Posterior cingulate gyrus (tissue), 11 donors: ENCODE measurements at regions of chr6 and their contacts with region 1.

Region 1: DNA sequence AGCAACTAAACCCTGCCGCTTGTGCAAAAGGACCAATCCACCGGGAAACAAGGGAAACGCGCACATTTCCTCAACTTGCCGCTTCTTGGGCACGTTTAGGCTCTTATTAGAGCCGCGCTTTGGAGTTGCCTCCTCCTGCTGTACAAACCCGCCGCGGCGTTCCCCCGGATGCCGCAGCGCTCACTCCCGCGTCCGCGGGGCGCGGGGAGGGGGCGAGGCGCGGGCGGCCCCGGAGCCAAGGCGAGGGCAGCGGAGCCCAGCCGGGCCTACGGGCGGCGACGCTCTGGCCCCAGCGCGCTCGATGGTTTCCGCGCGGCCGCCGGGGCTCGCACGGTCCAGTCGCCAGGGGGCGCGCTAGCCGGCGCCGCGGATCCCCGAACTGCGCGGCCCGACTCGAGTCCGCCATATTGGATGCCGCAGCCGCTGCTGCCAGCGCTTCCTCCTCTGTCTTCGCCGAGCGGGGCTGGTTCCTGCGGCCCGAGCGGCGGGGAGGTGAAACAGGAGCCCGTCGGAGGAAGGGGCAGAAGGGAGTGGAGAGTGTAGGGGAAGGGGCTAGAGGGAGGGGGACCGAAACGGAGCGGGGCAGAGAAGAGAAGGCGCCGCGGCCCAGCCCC is at the start of gene SCAF8:
- DNase-seq: peak; percentile 67 to 97 (median 78)

Region 2: GRCh38 chr6:154509421-154510142 is 223.5 kb before region 1 on chr6:
- intact Hi-C with region 1: loop called (anchors 2 kb)
- DNase-seq: peak in 7 of 10 donors; percentile 13 to 88 (median 44)

Region 3: DNA sequence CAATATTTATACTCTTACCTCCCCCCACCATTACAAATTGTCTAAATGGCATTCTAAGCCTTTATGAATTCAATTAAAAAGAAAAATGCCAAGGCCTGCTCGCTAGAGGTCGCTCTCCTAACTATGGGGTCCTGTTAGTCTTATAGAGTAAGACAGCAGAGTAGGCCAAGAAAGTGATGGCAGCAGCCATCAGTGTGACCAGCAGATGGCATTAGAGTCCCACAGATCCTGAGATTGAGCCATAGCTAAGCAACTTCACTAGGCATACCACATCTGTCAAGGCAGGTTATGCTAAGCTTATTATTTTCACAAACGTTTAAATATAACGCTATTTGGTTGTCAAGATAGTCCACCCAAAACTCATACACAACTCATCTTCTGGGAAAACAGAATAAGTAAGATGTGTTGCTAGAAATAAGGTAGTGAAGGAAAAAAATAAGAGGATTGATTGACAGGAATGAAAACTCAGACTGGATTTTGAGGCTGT is 57.5 kb before region 1 on chr6:
- intact Hi-C with region 1: loop called (anchors 5 kb)
- DNase-seq: peak; percentile 69 to 98 (median 88)

Region 4: DNA sequence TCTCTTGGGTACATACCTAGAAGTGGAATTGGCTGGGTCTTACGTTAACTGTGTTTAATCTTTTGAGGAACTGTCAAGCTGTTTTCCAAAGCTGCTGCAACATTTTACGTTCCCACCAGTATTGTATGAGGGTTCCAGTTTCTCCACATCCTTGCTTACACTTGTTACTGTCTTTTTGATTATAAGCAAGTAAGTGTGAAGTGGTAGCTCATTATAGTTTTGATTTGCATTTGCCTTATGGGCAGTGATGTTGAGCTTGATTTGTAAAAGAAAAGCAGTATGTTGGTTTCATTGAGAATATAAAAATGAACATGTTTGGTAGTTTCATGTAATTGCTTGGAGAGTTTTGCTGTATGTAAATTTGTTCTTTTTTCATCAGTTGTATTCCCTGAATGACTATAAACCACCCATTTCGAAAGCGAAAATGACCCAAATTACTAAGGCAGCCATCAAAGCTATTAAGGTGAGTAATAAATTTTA is 40.5 kb after region 1 on chr6:
- intact Hi-C with region 1: no loop called
- DNase-seq: no peak

Region 5: GRCh38 chr6:154805288-154805911 is 72.3 kb after region 1 on chr6:
- intact Hi-C with region 1: loop called (anchors 1 kb)
- DNase-seq: no peak

Region 6: GRCh38 chr6:155314092-155314772 is 581.1 kb after region 1 on chr6 and contains the start of gene TFB1M:
- intact Hi-C with region 1: loop called (anchors 5 kb)
- DNase-seq: peak; percentile 98 to 100 (median 98)